ENCODE measurements at regions of chr18 and their contacts with region 1.

Region 1: GRCh38 chr18:44679056-44679905 is 1.4 kb upstream of the SETBP1 start:
- DNase-seq: peak; percentile 83
- H3K4me3 Mint-ChIP-seq: peak overlapping the region; percentile 52
- H3K27ac Mint-ChIP-seq: no peak overlapping the region
- H3K4me1 Mint-ChIP-seq: peaks cover 7% of the 10 kb centered on the region
- H3K27me3 Mint-ChIP-seq: peaks cover 22% of the 10 kb centered on the region

Region 2: GRCh38 chr18:44725300-44726096 is 46.2 kb after region 1 on chr18:
- CTCF ChIA-PET with region 1: interaction called, 5 read pairs
- intact Hi-C with region 1: loop called (anchors 1 kb)
- DNase-seq: peak; percentile 78
- H3K4me3 Mint-ChIP-seq: no peak overlapping the region
- H3K27ac Mint-ChIP-seq: peak overlapping the region; percentile 59
- H3K4me1 Mint-ChIP-seq: peaks cover 54% of the 10 kb centered on the region
- H3K27me3 Mint-ChIP-seq: no peaks in the 10 kb centered on the region

Region 3: DNA sequence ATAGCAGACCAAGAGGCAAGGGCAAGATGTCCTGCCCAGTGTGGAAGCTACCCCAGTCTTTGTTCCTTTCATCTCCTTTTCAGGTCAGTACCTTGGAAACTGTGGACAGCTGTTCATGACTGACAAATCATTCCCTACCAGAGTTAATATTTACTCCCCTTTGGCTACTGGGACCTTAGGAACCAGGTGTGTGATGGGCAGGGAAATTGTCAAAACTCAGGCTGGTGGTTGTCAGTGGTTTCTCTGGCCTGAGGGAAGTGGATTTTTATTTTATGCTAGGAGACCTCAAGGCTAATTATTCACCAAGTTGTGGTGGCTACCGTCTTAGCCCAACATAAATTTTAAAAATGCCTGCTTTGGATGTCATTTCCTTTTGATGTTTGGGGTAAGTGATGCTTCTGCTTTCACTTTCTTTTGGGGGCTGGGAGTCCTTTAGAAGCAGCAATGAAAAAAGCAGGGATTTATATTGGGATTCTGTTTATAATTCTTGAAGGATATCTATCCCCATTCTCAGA is 120.7 kb after region 1 on chr18:
- CTCF ChIA-PET with region 1: no interaction called
- intact Hi-C with region 1: loop called (anchors 2 kb)
- DNase-seq: no peak
- H3K4me3 Mint-ChIP-seq: no peak overlapping the region
- H3K27ac Mint-ChIP-seq: no peak overlapping the region
- H3K4me1 Mint-ChIP-seq: peaks cover 49% of the 10 kb centered on the region
- H3K27me3 Mint-ChIP-seq: peaks cover 9% of the 10 kb centered on the region

Region 4: DNA sequence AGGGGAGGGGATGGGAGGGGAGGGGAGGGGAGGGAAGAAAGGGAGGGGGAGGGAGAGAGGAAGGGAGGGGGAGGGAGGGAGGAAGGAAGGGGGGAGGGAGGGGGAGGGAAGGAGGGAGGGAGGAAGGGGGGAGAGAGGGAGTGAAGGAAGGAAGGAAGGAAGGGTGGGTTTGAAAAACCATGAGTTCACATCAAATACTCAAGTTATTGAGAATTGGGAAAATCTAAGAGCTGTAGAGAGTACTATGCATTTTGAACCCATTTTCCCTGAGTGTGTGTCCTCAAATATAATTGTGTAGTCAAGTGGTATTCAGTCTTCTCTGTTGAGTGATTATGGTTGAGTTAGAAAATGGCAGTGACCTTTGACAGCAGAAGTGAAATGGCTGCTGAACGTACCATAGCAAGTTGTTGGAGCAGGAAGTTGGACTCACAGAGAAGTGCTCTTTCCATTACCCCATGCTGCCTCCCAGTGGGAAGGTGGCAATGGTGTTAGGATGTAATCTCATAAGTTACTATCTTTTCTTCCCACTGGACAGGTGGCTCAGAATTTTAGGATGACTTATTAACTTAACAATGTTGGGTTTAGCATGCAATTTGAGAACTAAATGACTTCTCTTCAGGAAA is 216.0 kb after region 1 on chr18:
- CTCF ChIA-PET with region 1: interaction called, 4 read pairs
- intact Hi-C with region 1: loop called (anchors 1 kb)
- DNase-seq: peak; percentile 71
- H3K4me3 Mint-ChIP-seq: no peak overlapping the region
- H3K27ac Mint-ChIP-seq: no peak overlapping the region
- H3K4me1 Mint-ChIP-seq: peaks cover 24% of the 10 kb centered on the region
- H3K27me3 Mint-ChIP-seq: no peaks in the 10 kb centered on the region

Region 5: GRCh38 chr18:45212181-45213039 is 533.1 kb after region 1 on chr18:
- CTCF ChIA-PET with region 1: interaction called, 6 read pairs
- intact Hi-C with region 1: loop called (anchors 1 kb)
- DNase-seq: peak; percentile 84
- H3K4me3 Mint-ChIP-seq: no peak overlapping the region
- H3K27ac Mint-ChIP-seq: no peak overlapping the region
- H3K4me1 Mint-ChIP-seq: no peaks in the 10 kb centered on the region
- H3K27me3 Mint-ChIP-seq: no peaks in the 10 kb centered on the region